CD8-positive, alpha-beta memory T cell (primary cell): ENCODE measurements at regions of chr21 and their contacts with region 1.

Region 1: GRCh38 chr21:42403611-42404231 is at the start of gene UBASH3A:
- DNase-seq: peak in 4 of 5 donors; percentile 24 to 84 (median 76)
- H3K4me3 ChIP-seq: peak within 1 kb of the TSS; percentile 86
- H3K4me3 Mint-ChIP-seq: peak within 1 kb of the TSS; percentile 89 to 95 (median 89)
- H3K27ac ChIP-seq: peak within 1 kb of the TSS; percentile 64
- H3K27ac Mint-ChIP-seq: peak within 1 kb of the TSS; percentile 83 to 99 (median 96)
- H3K4me1 ChIP-seq: peaks cover 57% of the 10 kb centered on the region
- H3K4me1 Mint-ChIP-seq: peaks cover 57 to 74% (median 71%) of the 10 kb centered on the region in 3 donors
- H3K27me3 ChIP-seq: no peaks in the 10 kb centered on the region
- H3K27me3 Mint-ChIP-seq: no peaks in the 10 kb centered on the region
- total RNA-seq, gene UBASH3A: 36.4 to 38.7 TPM

Region 2: DNA sequence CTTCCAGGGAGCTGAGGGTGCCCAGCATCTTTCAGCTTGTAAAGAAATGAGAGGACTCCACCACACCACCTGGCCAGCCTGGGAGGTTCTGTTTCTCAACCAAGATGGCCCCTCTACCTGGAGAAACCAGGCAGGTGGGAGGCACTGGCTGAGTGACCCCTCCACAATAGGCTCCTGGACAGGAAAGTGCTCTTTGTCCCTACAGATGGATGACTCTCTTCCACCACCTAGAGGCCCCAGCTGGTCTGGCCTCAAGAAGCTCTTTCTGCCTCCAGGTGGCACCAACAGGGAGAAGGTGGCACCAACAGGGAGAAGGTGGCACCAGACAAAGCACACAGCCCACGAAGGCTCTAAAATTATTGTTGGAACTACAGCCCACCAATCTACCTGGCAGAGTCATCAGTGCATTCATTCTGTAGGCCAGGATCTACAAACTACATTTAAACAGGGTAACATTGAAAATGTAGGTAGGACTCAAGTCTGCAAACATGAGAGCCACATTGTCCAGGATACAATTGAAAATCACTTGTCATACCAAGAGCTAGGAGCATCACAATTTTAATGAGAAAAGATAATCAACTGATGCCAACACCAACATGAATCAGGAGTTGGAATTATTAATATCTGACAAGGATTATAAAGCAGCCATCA is 22.3 kb before region 1 on chr21:
- CTCF ChIA-PET with region 1: interaction called, 27 read pairs
- POLR2A ChIA-PET with region 1: interaction called, 3 read pairs
- DNase-seq: peak in 2 of 5 donors; percentile 30 to 75
- H3K4me3 ChIP-seq: no peak overlapping the region
- H3K4me3 Mint-ChIP-seq: no peak overlapping the region
- H3K27ac ChIP-seq: no peak overlapping the region
- H3K27ac Mint-ChIP-seq: peak overlapping the region in 1 of 8 donors; percentile 73
- H3K4me1 ChIP-seq: peaks cover 10% of the 10 kb centered on the region
- H3K4me1 Mint-ChIP-seq: peaks cover 8 to 18% (median 8%) of the 10 kb centered on the region in 3 donors
- H3K27me3 ChIP-seq: no peaks in the 10 kb centered on the region
- H3K27me3 Mint-ChIP-seq: peaks cover 0 to 1% of the 10 kb centered on the region in 2 donors

Region 3: GRCh38 chr21:42392721-42393442 is 10.8 kb before region 1 on chr21:
- CTCF ChIA-PET with region 1: interaction called, 12 read pairs
- POLR2A ChIA-PET with region 1: interaction called, 19 read pairs
- DNase-seq: peak in 1 of 5 donors; percentile 63
- H3K4me3 ChIP-seq: no peak overlapping the region
- H3K4me3 Mint-ChIP-seq: peak overlapping the region; percentile 2 to 78 (median 48)
- H3K27ac ChIP-seq: no peak overlapping the region
- H3K27ac Mint-ChIP-seq: peak overlapping the region; percentile 1 to 90 (median 26)
- H3K4me1 ChIP-seq: peaks cover 39% of the 10 kb centered on the region
- H3K4me1 Mint-ChIP-seq: peaks cover 29 to 45% (median 41%) of the 10 kb centered on the region in 3 donors
- H3K27me3 ChIP-seq: no peaks in the 10 kb centered on the region
- H3K27me3 Mint-ChIP-seq: peaks cover 0 to 5% of the 10 kb centered on the region in 2 donors

Region 4: GRCh38 chr21:42414928-42415769 is 11.4 kb after region 1 on chr21:
- CTCF ChIA-PET with region 1: interaction called, 13 read pairs
- POLR2A ChIA-PET with region 1: interaction called, 21 read pairs
- DNase-seq: peak; percentile 80 to 96 (median 86)
- H3K4me3 ChIP-seq: peak overlapping the region; percentile 30
- H3K4me3 Mint-ChIP-seq: peak overlapping the region; percentile 59 to 91 (median 76)
- H3K27ac ChIP-seq: peak overlapping the region; percentile 75
- H3K27ac Mint-ChIP-seq: peak overlapping the region; percentile 95 to 100 (median 99)
- H3K4me1 ChIP-seq: peaks cover 96% of the 10 kb centered on the region
- H3K4me1 Mint-ChIP-seq: peaks cover 33 to 67% (median 53%) of the 10 kb centered on the region in 3 donors
- H3K27me3 ChIP-seq: no peaks in the 10 kb centered on the region
- H3K27me3 Mint-ChIP-seq: no peaks in the 10 kb centered on the region

Region 5: GRCh38 chr21:42424914-42425541 is 21.3 kb after region 1 on chr21:
- CTCF ChIA-PET with region 1: interaction called, 12 read pairs
- POLR2A ChIA-PET with region 1: interaction called, 45 read pairs
- DNase-seq: peak; percentile 67 to 90 (median 90)
- H3K4me3 ChIP-seq: peak overlapping the region; percentile 48
- H3K4me3 Mint-ChIP-seq: peak overlapping the region; percentile 43 to 80 (median 78)
- H3K27ac ChIP-seq: peak overlapping the region; percentile 57
- H3K27ac Mint-ChIP-seq: peak overlapping the region; percentile 83 to 95 (median 89)
- H3K4me1 ChIP-seq: peaks cover 73% of the 10 kb centered on the region
- H3K4me1 Mint-ChIP-seq: peaks cover 76 to 88% (median 77%) of the 10 kb centered on the region in 3 donors
- H3K27me3 ChIP-seq: no peaks in the 10 kb centered on the region
- H3K27me3 Mint-ChIP-seq: no peaks in the 10 kb centered on the region